ENCODE measurements at regions of chr14 and their contacts with region 1.

Region 1: GRCh38 chr14:96584199-96584906 is 82.2 kb downstream of the PAPOLA start:
- DNase-seq: peak in 1 of 3 donors; percentile 64
- ATAC-seq: peak; percentile 72 to 92 (median 85)
- H3K4me3 ChIP-seq: no peak overlapping the region
- H3K27ac ChIP-seq: no peak overlapping the region
- H3K4me1 ChIP-seq: no peaks in the 10 kb centered on the region
- H3K27me3 ChIP-seq: no peaks in the 10 kb centered on the region
- CTCF ChIP-seq: peak; percentile 24 to 49 (median 47)
- POLR2A ChIP-seq: no peak

Region 2: GRCh38 chr14:96722736-96723349 is 138.5 kb after region 1 on chr14:
- intact Hi-C with region 1: loop called in 1 of 2 experiments (anchors 10 kb)
- DNase-seq: no peak
- ATAC-seq: no peak
- H3K4me3 ChIP-seq: no peak overlapping the region
- H3K27ac ChIP-seq: no peak overlapping the region
- H3K4me1 ChIP-seq: no peaks in the 10 kb centered on the region
- H3K27me3 ChIP-seq: no peaks in the 10 kb centered on the region
- CTCF ChIP-seq: no peak
- POLR2A ChIP-seq: no peak

Measured in right lobe of liver (tissue), 6 donors.